Motor neuron (in vitro differentiated cells): ENCODE measurements at regions of chr17 and their contacts with region 1.

Region 1: GRCh38 chr17:74203439-74204240 is at the start of gene RPL38:
- ATAC-seq: peak; percentile 70 to 84 (median 80)
- H3K4me3 ChIP-seq: peak within 1 kb of the TSS; percentile 68 to 95 (median 79)
- H3K27ac ChIP-seq: peak within 1 kb of the TSS; percentile 63 to 83
- H3K4me1 ChIP-seq: peaks cover 21 to 31% of the 10 kb centered on the region in 2 donors
- total RNA-seq, gene RPL38: 1,787 to 3,038 (median 2,213) TPM

Region 2: GRCh38 chr17:73874008-73874720 is 329.5 kb before region 1 on chr17:
- in situ Hi-C with region 1: no loop called
- ATAC-seq: peak in 4 of 8 experiments; percentile 36 to 95 (median 52)
- H3K4me3 ChIP-seq: no peak overlapping the region
- H3K27ac ChIP-seq: no peak overlapping the region
- H3K4me1 ChIP-seq: peaks cover 13 to 16% of the 10 kb centered on the region in 2 donors

Region 3: DNA sequence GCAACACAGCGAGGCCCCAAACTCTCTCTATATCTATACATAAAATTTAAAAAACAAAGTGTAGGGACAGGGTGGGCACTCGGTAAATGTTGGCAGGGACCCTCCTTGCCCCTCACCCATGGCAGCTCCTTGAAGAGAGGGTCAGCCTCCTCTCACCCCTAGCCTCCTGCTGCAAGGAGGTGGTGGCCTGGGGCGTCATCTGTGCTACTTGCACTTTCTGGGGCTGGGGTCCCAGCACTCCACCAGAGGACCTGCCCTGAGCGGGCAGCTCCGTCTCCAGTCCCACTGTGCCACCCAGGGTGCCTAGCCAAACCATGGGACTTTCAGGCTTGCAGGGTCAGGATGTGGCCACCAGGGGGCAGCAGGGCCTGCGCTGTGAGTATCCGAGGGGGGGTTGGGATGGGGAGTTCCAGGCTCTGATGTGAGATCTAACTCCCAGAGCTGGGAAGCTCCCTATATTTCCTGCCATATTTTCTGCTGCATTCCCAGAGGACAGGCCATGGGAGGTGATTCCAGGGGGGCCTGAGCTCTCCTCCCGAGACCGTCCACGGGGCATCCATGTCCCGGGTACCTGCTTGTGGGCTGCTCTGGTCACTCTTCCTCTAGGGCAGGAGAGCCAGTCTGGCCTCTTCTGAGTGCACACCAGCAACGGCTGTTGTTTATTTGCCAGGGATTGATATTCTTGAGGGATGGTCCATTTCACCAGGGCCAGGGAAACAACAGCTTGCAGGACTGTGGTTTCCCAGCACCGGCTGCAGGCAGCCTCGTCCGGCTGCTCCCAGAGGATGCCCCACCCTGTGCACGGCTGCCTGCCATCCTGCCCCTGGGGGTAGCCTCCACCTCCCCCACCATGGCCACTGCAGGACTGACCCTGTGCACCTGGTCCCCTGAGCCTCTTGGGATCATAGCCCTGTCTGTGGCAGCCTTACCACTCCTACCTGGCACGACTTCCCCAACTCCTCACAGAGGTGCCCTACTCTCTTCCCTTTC is 164.7 kb after region 1 on chr17:
- in situ Hi-C with region 1: loop called in 2 of 9 experiments (anchors 25 kb)
- ATAC-seq: peak; percentile 61 to 92 (median 68)
- H3K4me3 ChIP-seq: no peak overlapping the region
- H3K27ac ChIP-seq: peak overlapping the region in 1 of 2 donors; percentile 5
- H3K4me1 ChIP-seq: peaks cover 12 to 19% of the 10 kb centered on the region in 2 donors